ENCODE measurements at regions of chr22 and their contacts with region 1.

Region 1: DNA sequence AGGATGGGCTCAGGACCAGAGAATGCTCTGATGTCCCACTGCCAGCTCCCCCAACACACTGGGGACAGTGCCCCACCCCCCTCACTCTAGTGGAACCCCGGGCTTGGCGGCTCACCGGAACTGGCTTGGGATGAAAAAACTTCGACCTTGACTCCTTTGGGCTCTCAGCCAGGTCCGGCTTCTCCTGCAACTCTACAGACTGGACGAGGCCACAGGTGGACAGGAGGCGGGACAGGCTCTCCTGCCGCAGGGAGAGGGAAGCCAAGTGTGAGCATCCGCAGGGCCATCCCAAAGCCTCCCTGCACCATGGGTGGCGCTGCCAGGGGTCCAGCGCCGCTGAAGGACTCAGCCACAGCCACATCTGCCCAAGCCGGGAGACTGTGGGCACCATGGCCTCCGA is 3.7 kb downstream of the RRP7A start:
- DNase-seq: peak in 1 of 3 donors; percentile 50
- ATAC-seq: no peak
- H3K4me3 ChIP-seq: no peak overlapping the region
- H3K27ac ChIP-seq: no peak overlapping the region
- H3K4me1 ChIP-seq: peaks cover 2% of the 10 kb centered on the region
- H3K27me3 ChIP-seq: no peaks in the 10 kb centered on the region

Region 2: DNA sequence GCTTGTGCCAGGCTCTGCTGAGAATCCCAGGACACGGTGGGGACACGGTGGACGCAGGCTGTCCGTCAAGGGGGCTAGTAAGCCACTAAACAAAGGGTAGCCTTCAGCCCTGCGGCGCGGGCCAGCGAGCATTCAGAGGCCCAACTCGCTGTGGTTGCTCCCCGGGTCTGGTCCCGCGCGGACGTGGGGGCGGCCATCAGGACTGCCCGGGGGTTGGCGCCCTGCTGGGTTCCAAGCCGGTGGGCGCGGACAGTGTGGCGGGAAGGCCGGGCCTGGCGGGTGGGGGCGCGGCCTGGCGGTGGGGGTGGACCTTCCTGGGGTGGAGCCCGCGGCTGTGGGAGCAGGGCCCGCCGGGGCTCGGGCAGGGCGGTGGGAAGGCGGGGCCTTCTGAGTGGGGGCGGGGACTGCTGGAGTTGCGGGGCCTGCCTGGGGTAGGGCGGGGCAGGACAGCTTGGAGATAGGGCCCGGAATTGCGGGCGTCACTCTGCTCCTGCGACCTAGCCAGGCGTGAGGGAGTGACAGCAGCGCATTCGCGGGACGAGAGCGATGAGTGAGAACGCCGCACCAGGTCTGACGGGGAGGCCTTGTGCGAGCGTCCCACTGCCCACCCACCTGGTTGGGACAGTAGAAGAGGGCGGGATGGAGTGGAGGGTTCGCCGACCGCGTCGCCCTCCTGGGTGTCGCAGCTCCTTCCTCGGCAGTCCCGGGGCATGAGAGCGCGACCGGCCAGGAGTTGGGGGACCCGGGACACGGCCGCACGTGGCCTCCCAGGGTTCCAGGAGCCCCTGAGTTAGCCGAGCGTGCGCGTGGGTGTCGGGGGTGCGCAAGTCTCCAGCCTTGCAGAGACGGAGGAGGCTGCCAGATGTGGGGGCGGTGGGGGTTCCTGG is 37.8 kb after region 1 on chr22 and contains the start of gene SERHL2:
- intact Hi-C with region 1: loop called in 1 of 4 experiments (anchors 5 kb)
- DNase-seq: peak; percentile 92 to 97 (median 97)
- ATAC-seq: peak; percentile 96 to 97
- H3K4me3 ChIP-seq: peak within 1 kb of the TSS; percentile 54
- H3K27ac ChIP-seq: no peak within 1 kb of the TSS
- H3K4me1 ChIP-seq: no peaks in the 10 kb centered on the region
- H3K27me3 ChIP-seq: no peaks in the 10 kb centered on the region
- total RNA-seq, gene SERHL2: 3.3 to 5.0 (median 4.3) TPM